MCF 10A (cell line): ENCODE measurements at regions of chr9 and their contacts with region 1.

Region 1: DNA sequence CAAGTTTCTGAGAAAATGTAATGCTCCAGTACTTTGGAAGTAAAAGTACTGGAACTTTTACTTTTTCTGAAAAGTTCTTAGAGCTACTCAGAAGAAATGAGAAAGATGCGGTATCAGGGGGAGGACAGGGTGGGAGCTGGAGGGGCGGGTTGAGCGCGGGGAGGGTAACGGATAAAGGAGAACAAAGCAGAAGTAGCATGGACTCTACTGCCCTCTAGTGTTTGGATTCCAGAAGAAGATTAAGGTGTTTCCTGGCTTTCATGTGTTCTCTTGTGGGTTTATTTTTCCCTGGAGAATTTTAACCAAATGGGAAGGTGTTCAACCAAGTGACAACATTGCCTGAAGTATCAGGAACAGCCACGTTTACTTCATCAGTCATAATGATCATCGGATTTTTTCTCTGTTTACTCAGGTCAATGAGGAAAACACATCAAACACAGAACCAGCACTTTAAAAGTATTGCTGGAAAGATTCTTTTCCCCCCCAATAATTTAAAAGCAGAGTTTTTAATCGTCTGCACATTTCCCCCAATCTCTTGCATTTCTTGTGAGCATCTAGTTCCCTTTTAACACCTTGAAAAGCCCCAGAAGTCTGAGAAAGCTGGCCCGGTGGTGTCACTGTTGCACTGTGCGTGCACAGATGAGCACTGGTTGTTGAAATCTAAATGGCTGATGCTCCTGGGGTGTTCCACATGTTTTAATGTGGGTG is 190.6 kb downstream of the MPDZ start:
- DNase-seq: peak; percentile 68
- H3K4me3 Mint-ChIP-seq: peak overlapping the region; percentile 16
- H3K27ac Mint-ChIP-seq: no peak overlapping the region
- H3K4me1 Mint-ChIP-seq: peaks cover 14% of the 10 kb centered on the region
- H3K27me3 Mint-ChIP-seq: no peaks in the 10 kb centered on the region
- CTCF ChIP-seq: peak; percentile 66

Region 2: GRCh38 chr9:12702160-12702758 is 386.6 kb before region 1 on chr9:
- CTCF ChIA-PET with region 1: interaction called, 5 read pairs
- POLR2A ChIA-PET with region 1: no interaction called
- intact Hi-C with region 1: loop called (anchors 1 kb)
- DNase-seq: peak; percentile 76
- H3K4me3 Mint-ChIP-seq: no peak overlapping the region
- H3K27ac Mint-ChIP-seq: no peak overlapping the region
- H3K4me1 Mint-ChIP-seq: peaks cover 16% of the 10 kb centered on the region
- H3K27me3 Mint-ChIP-seq: no peaks in the 10 kb centered on the region
- CTCF ChIP-seq: peak; percentile 58

Region 3: DNA sequence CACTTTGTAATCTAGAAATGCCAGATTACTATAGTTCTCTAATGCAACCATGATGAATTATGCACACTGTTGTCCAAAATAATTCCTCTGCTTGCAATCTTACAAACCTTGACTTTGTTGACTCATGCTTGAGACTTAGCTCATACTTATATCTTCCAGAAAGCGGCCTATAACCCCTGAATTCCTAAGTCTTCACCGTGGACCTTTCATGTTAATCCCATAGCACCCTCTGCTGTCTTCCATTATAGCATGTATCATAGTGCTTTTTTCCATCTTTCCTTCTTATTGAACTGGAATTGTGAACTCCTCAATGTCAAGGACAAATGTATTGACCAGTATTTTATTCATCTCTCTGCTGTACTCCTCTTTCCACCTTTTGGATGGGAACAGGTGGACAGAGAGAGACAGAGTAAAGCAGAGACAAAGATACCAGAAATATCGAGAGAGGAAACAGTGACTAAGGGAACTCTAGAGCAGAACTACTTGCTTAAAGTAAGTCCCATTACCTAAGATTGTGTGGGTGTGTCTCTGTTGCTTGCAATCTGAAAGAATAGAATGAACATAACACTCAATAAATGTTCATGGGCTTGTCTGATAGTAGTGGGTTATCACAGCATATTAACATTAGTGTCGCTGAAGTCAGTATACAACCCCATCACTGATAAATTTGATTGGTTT is 204.0 kb before region 1 on chr9:
- CTCF ChIA-PET with region 1: interaction called, 3 read pairs
- POLR2A ChIA-PET with region 1: no interaction called
- intact Hi-C with region 1: loop called (anchors 2 kb)
- DNase-seq: peak; percentile 84
- H3K4me3 Mint-ChIP-seq: no peak overlapping the region
- H3K27ac Mint-ChIP-seq: no peak overlapping the region
- H3K4me1 Mint-ChIP-seq: peaks cover 13% of the 10 kb centered on the region
- H3K27me3 Mint-ChIP-seq: no peaks in the 10 kb centered on the region
- CTCF ChIP-seq: peak; percentile 62

Region 4: DNA sequence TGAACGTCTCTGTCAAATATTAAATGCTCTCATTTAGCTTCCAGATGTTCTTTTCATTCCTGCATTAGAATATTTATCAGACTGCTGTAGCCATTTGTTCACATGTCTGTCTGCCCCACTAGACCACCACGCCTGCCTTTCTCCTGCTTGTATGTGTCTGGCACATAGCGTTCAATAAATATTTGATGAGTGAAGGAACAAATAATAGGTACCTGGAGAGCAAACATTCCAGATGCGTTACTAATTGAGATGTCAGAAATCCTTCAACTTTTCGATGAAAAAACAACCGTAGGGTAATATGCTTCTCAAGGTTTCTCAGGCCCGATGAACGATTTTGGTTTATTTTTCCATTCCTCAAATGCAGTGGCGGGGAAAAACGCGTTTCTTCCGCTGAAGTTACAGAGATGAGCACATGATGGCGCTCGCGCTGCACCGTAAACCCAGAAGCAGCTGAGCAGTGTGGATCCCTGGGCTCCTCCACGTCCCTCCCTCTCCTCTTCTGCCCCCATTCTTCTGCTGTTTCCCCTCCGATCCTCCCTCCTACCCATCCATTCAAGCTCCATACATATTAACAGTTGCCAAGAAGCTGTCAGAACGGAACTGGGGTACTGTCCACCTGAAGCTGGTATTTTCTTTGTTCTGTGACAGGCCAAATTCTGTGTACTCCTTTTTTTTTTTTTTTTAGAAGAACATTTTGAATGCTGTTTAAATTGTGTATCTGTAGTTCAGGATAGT is 54.7 kb before region 1 on chr9:
- CTCF ChIA-PET with region 1: interaction called, 126 read pairs
- POLR2A ChIA-PET with region 1: interaction called, 5 read pairs
- intact Hi-C with region 1: loop called (anchors 1 kb)
- DNase-seq: peak; percentile 68
- H3K4me3 Mint-ChIP-seq: peak overlapping the region; percentile 30
- H3K27ac Mint-ChIP-seq: no peak overlapping the region
- H3K4me1 Mint-ChIP-seq: peaks cover 16% of the 10 kb centered on the region
- H3K27me3 Mint-ChIP-seq: no peaks in the 10 kb centered on the region
- CTCF ChIP-seq: peak; percentile 83

Region 5: GRCh38 chr9:13068440-13068839 is 20.4 kb before region 1 on chr9:
- CTCF ChIA-PET with region 1: interaction called, 11 read pairs
- POLR2A ChIA-PET with region 1: no interaction called
- intact Hi-C with region 1: no loop called
- DNase-seq: no peak
- H3K4me3 Mint-ChIP-seq: no peak overlapping the region
- H3K27ac Mint-ChIP-seq: no peak overlapping the region
- H3K4me1 Mint-ChIP-seq: no peaks in the 10 kb centered on the region
- H3K27me3 Mint-ChIP-seq: no peaks in the 10 kb centered on the region
- CTCF ChIP-seq: no peak

Region 6: DNA sequence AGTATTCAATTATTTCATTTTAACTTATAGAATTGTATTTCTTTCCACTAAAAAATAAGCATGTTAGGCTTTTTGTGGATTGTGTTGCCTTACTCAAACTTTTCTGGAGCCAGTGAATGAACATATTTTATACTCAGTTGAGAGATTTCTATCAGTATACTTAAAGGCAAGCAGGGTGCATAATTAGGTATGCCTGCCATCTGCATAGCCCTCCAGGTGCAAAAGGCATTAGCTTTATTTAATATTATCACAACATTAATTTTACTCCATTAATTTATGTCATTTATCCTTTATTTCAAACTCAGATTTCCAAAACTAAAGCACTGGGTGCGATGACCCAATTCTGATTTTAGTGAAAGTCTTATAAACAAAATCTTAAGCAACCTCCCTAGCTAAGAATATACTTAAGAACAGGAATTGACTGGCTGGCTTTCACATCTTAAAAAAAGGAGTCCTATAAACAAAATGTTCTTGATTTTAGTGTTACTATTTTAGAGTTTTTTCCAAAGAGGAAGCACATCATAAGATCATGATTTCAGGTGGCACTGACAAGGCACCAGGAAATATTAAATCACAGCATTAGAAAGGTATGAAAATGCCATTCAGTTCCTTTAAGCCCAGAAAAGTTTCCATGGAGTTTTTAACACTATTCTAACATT is 12.2 kb after region 1 on chr9:
- CTCF ChIA-PET with region 1: interaction called, 25 read pairs
- POLR2A ChIA-PET with region 1: no interaction called
- intact Hi-C with region 1: no loop called
- DNase-seq: no peak
- H3K4me3 Mint-ChIP-seq: no peak overlapping the region
- H3K27ac Mint-ChIP-seq: no peak overlapping the region
- H3K4me1 Mint-ChIP-seq: no peaks in the 10 kb centered on the region
- H3K27me3 Mint-ChIP-seq: no peaks in the 10 kb centered on the region
- CTCF ChIP-seq: no peak